ENCODE measurements at regions of chr4 and their contacts with region 1.

Region 1: GRCh38 chr4:176789955-176790354 is 2.8 kb downstream of the VEGFC start:
- DNase-seq: peak; percentile 81
- ATAC-seq: no peak
- H3K4me3 ChIP-seq: peak overlapping the region; percentile 96; the same call in 1 of the 2 replicates
- H3K27ac ChIP-seq: no peak overlapping the region
- H3K4me1 ChIP-seq: peaks cover 25% of the 10 kb centered on the region
- H3K27me3 ChIP-seq: no peaks in the 10 kb centered on the region
- CTCF ChIP-seq: peak; percentile 62
- POLR2A ChIP-seq: no peak
- RAD21 ChIP-seq: peak; percentile 60

Region 2: GRCh38 chr4:176363072-176363471 is 426.9 kb before region 1 on chr4:
- CTCF ChIA-PET with region 1: no interaction called
- POLR2A ChIA-PET with region 1: no interaction called
- dilution Hi-C with region 1: no loop called
- in situ Hi-C with region 1: no loop called
- intact Hi-C with region 1: no loop called
- DNase-seq: no peak
- ATAC-seq: peak; percentile 48
- H3K4me3 ChIP-seq: no peak overlapping the region
- H3K27ac ChIP-seq: no peak overlapping the region
- H3K4me1 ChIP-seq: peaks cover 4% of the 10 kb centered on the region
- H3K27me3 ChIP-seq: no peaks in the 10 kb centered on the region
- CTCF ChIP-seq: no peak
- POLR2A ChIP-seq: no peak
- RAD21 ChIP-seq: no peak

Region 3: GRCh38 chr4:176563591-176563990 is 226.4 kb before region 1 on chr4:
- CTCF ChIA-PET with region 1: no interaction called
- POLR2A ChIA-PET with region 1: no interaction called
- dilution Hi-C with region 1: no loop called
- in situ Hi-C with region 1: no loop called
- intact Hi-C with region 1: loop called (anchors 2 kb)
- DNase-seq: peak; percentile 33
- ATAC-seq: no peak
- H3K4me3 ChIP-seq: no peak overlapping the region
- H3K27ac ChIP-seq: no peak overlapping the region
- H3K4me1 ChIP-seq: no peaks in the 10 kb centered on the region
- H3K27me3 ChIP-seq: no peaks in the 10 kb centered on the region
- CTCF ChIP-seq: no peak
- POLR2A ChIP-seq: no peak
- RAD21 ChIP-seq: no peak

Region 4: DNA sequence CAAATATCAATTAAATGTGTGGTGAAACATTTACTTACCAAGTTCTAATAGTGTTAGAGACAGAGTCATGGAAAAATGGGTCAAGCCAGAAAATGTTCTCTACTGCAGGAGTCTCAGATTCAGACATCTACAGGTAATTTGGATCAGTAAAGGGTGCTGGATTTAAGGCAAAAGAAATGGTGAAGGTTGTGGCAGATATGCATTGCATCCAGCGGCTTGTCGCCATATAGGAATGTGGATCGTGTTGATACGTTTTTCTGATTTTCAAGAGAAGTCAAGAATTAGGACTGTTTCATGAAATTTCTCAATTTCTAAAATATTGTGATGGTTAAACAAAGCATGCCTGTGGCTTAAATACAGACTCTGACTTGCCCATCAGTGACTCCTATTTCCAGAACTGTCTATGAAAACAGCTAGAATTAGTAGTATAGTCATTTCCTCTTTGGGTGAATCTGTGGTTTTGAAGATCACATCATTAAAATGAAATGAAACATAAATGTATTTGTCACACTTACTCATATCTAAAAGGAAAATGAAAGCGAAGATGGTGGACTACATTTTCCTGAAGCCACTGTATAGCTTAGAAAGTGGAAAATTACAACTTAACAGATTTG is 112.9 kb after region 1 on chr4:
- CTCF ChIA-PET with region 1: no interaction called
- POLR2A ChIA-PET with region 1: interaction called, 4 read pairs
- dilution Hi-C with region 1: no loop called
- in situ Hi-C with region 1: no loop called
- intact Hi-C with region 1: loop called (anchors 2 kb)
- DNase-seq: peak; percentile 95
- ATAC-seq: peak; percentile 90
- H3K4me3 ChIP-seq: peak overlapping the region; percentile 36; the same call in 1 of the 2 replicates
- H3K27ac ChIP-seq: peak overlapping the region; percentile 63
- H3K4me1 ChIP-seq: peaks cover 6% of the 10 kb centered on the region; the same call in 1 of the 2 replicates
- H3K27me3 ChIP-seq: no peaks in the 10 kb centered on the region
- CTCF ChIP-seq: no peak
- POLR2A ChIP-seq: no peak
- RAD21 ChIP-seq: no peak; the same call in 1 of the 2 replicates

Region 5: DNA sequence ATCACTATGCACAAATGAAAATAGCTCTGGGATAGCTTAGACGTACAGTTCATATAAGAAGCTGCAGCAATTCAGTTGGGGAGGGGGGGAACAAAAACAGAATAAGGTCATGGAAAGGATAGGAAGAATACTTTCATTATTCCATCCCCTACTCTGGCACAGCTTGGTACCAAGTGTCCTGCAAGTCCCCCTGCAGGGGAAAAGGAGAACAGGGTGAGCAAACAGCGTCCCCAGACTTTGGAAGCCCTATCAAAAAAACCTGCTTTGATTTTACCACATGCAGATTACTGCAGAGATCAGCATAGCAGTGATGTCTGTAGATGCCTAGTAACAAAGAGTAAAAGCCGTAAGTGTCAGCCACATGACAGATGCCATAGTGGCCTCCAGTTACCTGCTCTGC is 310.4 kb after region 1 on chr4:
- CTCF ChIA-PET with region 1: no interaction called
- POLR2A ChIA-PET with region 1: no interaction called
- dilution Hi-C with region 1: no loop called
- in situ Hi-C with region 1: no loop called
- intact Hi-C with region 1: loop called (anchors 5 kb)
- DNase-seq: no peak
- ATAC-seq: no peak
- H3K4me3 ChIP-seq: no peak overlapping the region
- H3K27ac ChIP-seq: no peak overlapping the region
- H3K4me1 ChIP-seq: no peaks in the 10 kb centered on the region
- H3K27me3 ChIP-seq: no peaks in the 10 kb centered on the region
- CTCF ChIP-seq: no peak
- POLR2A ChIP-seq: no peak
- RAD21 ChIP-seq: no peak

Region 6: GRCh38 chr4:177229331-177229730 is 439.4 kb after region 1 on chr4:
- CTCF ChIA-PET with region 1: no interaction called
- POLR2A ChIA-PET with region 1: interaction called, 14 read pairs
- dilution Hi-C with region 1: no loop called
- in situ Hi-C with region 1: no loop called
- intact Hi-C with region 1: no loop called
- DNase-seq: peak; percentile 35
- ATAC-seq: peak; percentile 65
- H3K4me3 ChIP-seq: peak overlapping the region; percentile 44
- H3K27ac ChIP-seq: peak overlapping the region; percentile 70
- H3K4me1 ChIP-seq: peaks cover 7% of the 10 kb centered on the region
- H3K27me3 ChIP-seq: no peaks in the 10 kb centered on the region
- CTCF ChIP-seq: no peak
- POLR2A ChIP-seq: no peak
- RAD21 ChIP-seq: no peak

Measured in IMR-90 (cell line).